ENCODE measurements at regions of chr20 and their contacts with region 1.

Region 1: GRCh38 chr20:58864350-58864749 is 11.8 kb downstream of the GNAS start:
- DNase-seq: no peak
- H3K4me3 ChIP-seq: no peak overlapping the region
- H3K27ac ChIP-seq: no peak overlapping the region
- H3K4me1 ChIP-seq: no peaks in the 10 kb centered on the region
- H3K27me3 ChIP-seq: peaks cover 9% of the 10 kb centered on the region
- CTCF ChIP-seq: peak in 1 of 2 donors; percentile 42

Region 2: DNA sequence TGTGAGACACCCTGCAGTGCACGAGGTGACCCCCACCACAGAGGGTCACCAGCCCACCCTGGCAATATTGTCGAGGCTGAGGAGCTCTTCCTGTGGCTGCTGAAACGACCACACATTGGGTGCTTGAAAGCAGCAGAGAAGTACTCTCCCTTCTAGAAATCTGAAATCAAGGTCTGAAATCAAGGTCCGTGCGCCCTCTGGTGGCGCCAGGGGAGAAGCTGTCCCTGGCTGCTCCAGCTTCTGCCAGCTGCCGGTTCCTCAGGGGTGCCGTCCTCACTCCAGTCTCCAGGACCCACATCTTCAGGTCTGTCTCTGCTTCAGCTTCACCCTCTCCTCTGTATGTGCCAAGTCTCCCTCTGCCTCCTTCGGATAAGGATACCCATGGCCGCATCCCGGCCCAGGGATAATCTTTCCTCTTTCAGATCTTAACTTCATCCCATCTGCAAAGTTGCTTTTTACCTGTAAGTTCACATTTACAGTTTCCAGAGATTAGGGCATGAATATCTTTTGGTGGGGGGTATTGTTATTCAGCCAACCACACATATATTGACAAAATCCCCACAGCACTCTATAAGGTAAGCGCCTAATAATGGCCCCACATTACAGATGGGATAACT is 631.7 kb after region 1 on chr20:
- CTCF ChIA-PET with region 1: no interaction called
- dilution Hi-C with region 1: no loop called
- in situ Hi-C with region 1: no loop called
- intact Hi-C with region 1: loop called (anchors 5 kb)
- DNase-seq: peak; percentile 32
- H3K4me3 ChIP-seq: no peak overlapping the region
- H3K27ac ChIP-seq: no peak overlapping the region
- H3K4me1 ChIP-seq: no peaks in the 10 kb centered on the region
- H3K27me3 ChIP-seq: no peaks in the 10 kb centered on the region
- CTCF ChIP-seq: peak; percentile 83 to 90

Region 3: GRCh38 chr20:59518881-59519688 is 654.7 kb after region 1 on chr20:
- CTCF ChIA-PET with region 1: no interaction called
- dilution Hi-C with region 1: no loop called
- in situ Hi-C with region 1: no loop called
- intact Hi-C with region 1: loop called (anchors 5 kb)
- DNase-seq: peak; percentile 56
- H3K4me3 ChIP-seq: no peak overlapping the region
- H3K27ac ChIP-seq: no peak overlapping the region
- H3K4me1 ChIP-seq: no peaks in the 10 kb centered on the region
- H3K27me3 ChIP-seq: no peaks in the 10 kb centered on the region
- CTCF ChIP-seq: peak; percentile 85 to 87

Measured in mammary epithelial cell (primary cell).